ENCODE measurements at regions of chr2 and their contacts with region 1.

Region 1: GRCh38 chr2:237572021-237572741 is 5.8 kb downstream of the PRLH start:
- DNase-seq: peak; percentile 93
- ATAC-seq: peak; percentile 91 to 95

Region 2: DNA sequence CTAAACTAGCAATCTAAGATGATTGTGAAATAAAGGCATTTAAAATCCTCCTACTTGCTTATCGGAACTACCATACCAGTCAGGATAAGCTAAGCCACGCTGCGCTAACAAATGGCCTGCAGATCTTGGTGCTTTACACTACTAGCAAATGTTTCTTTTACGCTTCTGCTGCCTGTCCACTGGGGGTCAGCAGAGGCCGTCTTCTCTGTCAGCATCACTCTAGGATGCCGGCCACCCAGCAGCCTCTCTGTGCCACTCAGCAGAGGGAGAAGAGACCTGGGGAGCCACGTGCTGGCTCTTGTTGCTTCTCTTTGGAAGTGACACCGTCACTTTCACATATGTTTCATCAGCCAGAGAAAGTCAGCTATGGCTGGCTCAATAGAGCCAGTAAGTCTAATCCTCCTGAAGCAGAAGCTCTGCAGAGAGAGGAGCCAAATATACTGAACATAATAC is 449.9 kb before region 1 on chr2:
- intact Hi-C with region 1: loop called (anchors 10 kb)
- DNase-seq: peak; percentile 74
- ATAC-seq: peak; percentile 81 to 83

Region 3: GRCh38 chr2:237154082-237154638 is 418.0 kb before region 1 on chr2:
- intact Hi-C with region 1: loop called in 1 of 2 experiments (anchors 1 kb)
- DNase-seq: no peak
- ATAC-seq: peak in 1 of 2 donors; percentile 19

Region 4: GRCh38 chr2:237413777-237414661 is 158.2 kb before region 1 on chr2 and contains the start of gene COL6A3:
- intact Hi-C with region 1: loop called (anchors 10 kb)
- DNase-seq: peak; percentile 78
- ATAC-seq: peak; percentile 66 to 79
- total RNA-seq, gene COL6A3: 145 to 186 TPM

Region 5: GRCh38 chr2:237451643-237452469 is 120.3 kb before region 1 on chr2:
- intact Hi-C with region 1: no loop called
- DNase-seq: no peak
- ATAC-seq: no peak

Region 6: GRCh38 chr2:237512774-237513466 is 59.3 kb before region 1 on chr2:
- intact Hi-C with region 1: loop called (anchors 1 to 5 kb)
- DNase-seq: peak; percentile 87
- ATAC-seq: peak; percentile 71 to 79

Measured in left cardiac atrium (tissue), 4 donors.